ENCODE measurements at regions of chr17 and their contacts with region 1.

Region 1: GRCh38 chr17:76557368-76558197 is 17.7 kb downstream of the PRCD start:
- DNase-seq: peak; percentile 83 to 95
- H3K4me3 ChIP-seq: peak overlapping the region; percentile 97
- H3K27ac ChIP-seq: peak overlapping the region; percentile 85
- H3K4me1 ChIP-seq: peaks cover 27% of the 10 kb centered on the region
- H3K27me3 ChIP-seq: no peaks in the 10 kb centered on the region
- CTCF ChIP-seq: peak; percentile 59

Region 2: GRCh38 chr17:76370261-76370993 is 187.2 kb before region 1 on chr17:
- CTCF ChIA-PET with region 1: no interaction called
- POLR2A ChIA-PET with region 1: no interaction called
- intact Hi-C with region 1: no loop called
- DNase-seq: peak; percentile 66 to 80
- H3K4me3 ChIP-seq: no peak overlapping the region
- H3K27ac ChIP-seq: no peak overlapping the region
- H3K4me1 ChIP-seq: no peaks in the 10 kb centered on the region
- H3K27me3 ChIP-seq: no peaks in the 10 kb centered on the region
- CTCF ChIP-seq: peak; percentile 59; the same call in 1 of the 2 replicates

Region 3: DNA sequence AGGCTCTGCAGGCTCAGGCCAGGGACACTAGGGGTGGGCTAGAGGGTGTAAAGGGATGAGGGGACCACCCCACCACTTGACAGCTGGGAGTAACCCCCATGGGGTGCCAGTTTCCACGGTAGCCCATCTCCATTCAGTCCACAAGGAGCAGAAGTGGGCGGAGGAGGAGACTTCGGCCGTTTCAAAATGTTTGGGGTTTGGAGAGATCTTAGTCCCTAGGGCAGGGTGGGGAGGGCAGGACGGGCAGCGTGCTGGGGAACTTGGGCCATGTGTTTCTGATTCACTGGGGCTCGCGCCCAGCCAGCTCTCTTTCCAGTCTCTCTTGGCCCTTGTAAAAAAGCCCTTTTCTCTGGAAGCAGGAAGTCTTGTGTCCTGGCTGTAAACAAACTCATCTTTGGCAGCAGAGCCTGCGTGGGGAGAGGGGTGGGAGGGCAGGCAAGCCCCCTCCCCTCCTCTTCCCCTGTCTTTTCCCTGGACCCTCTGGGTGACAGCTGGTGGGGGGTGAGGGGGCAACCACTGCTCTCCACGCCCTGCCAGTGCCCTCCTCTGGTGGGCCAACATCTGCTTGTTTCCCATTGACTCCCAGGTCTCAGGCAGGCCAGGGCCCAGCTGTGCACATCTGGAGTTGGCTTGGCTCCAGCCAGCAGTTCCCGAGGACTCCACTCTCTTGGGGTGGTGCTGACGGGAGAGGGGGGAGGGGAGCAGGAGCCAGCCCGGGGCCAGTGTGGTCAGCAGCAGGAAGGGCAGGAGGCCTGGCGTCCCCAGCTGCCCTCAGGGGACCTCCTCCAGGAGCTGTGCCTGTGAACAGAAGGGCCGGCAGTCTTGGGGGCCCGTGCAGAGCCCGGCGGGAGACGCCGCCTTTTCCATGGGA is 28.1 kb before region 1 on chr17:
- CTCF ChIA-PET with region 1: interaction called, 9 read pairs
- POLR2A ChIA-PET with region 1: interaction called, 11 read pairs
- intact Hi-C with region 1: loop called (anchors 1 kb)
- DNase-seq: peak in 1 of 2 experiments; percentile 57
- H3K4me3 ChIP-seq: no peak overlapping the region
- H3K27ac ChIP-seq: peak overlapping the region; percentile 54
- H3K4me1 ChIP-seq: peaks cover 36% of the 10 kb centered on the region
- H3K27me3 ChIP-seq: no peaks in the 10 kb centered on the region
- CTCF ChIP-seq: no peak

Region 4: DNA sequence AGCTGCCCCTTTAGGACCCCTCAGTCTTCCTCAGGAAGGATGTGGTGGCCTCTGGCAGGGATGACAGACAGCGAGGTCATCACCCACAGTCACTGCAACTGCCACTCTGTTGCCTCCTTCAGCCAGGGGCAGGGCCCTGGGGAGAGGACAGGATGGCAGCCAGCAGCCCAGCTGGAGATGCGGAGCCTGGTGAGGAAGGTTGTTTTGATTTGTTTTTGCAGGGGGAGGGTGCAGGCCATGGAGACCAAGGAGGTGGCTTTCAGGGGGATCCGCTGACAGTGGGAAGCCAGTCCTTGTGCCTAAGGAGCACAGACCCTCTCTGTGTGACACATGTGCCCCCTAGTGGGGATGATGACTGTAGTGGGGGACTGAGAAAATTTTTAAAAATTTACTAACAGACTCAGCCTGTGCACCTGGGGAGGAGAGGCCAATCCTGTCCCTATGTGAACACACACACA is 10.4 kb before region 1 on chr17:
- CTCF ChIA-PET with region 1: no interaction called
- POLR2A ChIA-PET with region 1: no interaction called
- intact Hi-C with region 1: no loop called
- DNase-seq: peak in 1 of 2 experiments; percentile 47
- H3K4me3 ChIP-seq: no peak overlapping the region
- H3K27ac ChIP-seq: no peak overlapping the region
- H3K4me1 ChIP-seq: peaks cover 15% of the 10 kb centered on the region
- H3K27me3 ChIP-seq: no peaks in the 10 kb centered on the region
- CTCF ChIP-seq: peak; percentile 69

Region 5: GRCh38 chr17:76612977-76613851 is 55.6 kb after region 1 on chr17:
- CTCF ChIA-PET with region 1: interaction called, 4 read pairs
- POLR2A ChIA-PET with region 1: no interaction called
- intact Hi-C with region 1: loop called (anchors 1 kb)
- DNase-seq: peak; percentile 94 to 95
- H3K4me3 ChIP-seq: no peak overlapping the region
- H3K27ac ChIP-seq: no peak overlapping the region
- H3K4me1 ChIP-seq: peaks cover 28% of the 10 kb centered on the region
- H3K27me3 ChIP-seq: no peaks in the 10 kb centered on the region
- CTCF ChIP-seq: peak; percentile 56

Region 6: DNA sequence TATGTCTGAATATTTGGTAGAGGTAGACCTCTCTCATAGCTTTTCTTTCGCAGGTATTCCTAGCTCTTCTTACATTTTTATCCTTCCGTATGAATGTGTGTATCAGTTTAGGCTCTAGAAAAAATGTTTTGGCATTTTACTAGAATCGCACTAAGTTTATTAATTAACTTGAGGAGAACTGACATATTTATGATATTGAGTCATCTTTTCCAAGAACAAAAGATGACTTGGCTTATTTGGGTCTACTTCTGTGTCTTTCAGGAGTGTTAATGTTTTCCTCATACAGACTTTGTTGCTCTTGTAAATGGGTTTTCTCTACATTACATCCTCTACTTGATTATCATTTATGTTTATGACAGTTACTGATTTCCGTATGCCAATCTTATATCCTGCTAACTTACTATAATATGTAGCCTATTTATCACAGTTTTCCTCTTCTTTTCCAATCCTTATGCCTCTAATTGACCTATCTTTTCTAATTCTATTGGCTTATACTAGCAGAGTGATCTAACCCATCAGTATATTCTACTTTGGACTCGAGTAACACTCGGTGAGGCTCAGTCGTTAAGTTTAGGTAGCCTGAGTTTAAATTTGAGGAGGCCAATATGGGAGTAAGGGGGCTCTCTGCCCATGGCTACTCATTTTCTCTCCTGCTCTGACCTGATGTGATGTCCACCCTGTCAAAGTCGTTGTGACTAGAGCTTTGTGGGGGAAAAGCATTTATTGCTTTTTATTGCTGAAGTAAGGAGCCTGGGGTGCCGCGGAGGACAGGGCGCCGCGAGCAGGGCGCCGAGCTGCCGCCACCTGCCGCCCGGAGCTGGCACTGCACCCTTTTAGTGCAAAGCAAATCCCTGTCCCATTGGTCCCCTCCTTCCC is 65.9 kb after region 1 on chr17:
- CTCF ChIA-PET with region 1: no interaction called
- POLR2A ChIA-PET with region 1: interaction called, 10 read pairs
- intact Hi-C with region 1: no loop called
- DNase-seq: peak in 1 of 2 experiments; percentile 76
- H3K4me3 ChIP-seq: no peak overlapping the region
- H3K27ac ChIP-seq: no peak overlapping the region
- H3K4me1 ChIP-seq: peaks cover 15% of the 10 kb centered on the region
- H3K27me3 ChIP-seq: no peaks in the 10 kb centered on the region
- CTCF ChIP-seq: peak; percentile 83

Region 7: GRCh38 chr17:76681222-76682137 is 123.9 kb after region 1 on chr17:
- CTCF ChIA-PET with region 1: interaction called, 6 read pairs
- POLR2A ChIA-PET with region 1: interaction called, 5 read pairs
- intact Hi-C with region 1: loop called (anchors 1 kb)
- DNase-seq: peak in 1 of 2 experiments; percentile 70
- H3K4me3 ChIP-seq: no peak overlapping the region
- H3K27ac ChIP-seq: no peak overlapping the region
- H3K4me1 ChIP-seq: no peaks in the 10 kb centered on the region
- H3K27me3 ChIP-seq: no peaks in the 10 kb centered on the region
- CTCF ChIP-seq: peak; percentile 77

Region 8: DNA sequence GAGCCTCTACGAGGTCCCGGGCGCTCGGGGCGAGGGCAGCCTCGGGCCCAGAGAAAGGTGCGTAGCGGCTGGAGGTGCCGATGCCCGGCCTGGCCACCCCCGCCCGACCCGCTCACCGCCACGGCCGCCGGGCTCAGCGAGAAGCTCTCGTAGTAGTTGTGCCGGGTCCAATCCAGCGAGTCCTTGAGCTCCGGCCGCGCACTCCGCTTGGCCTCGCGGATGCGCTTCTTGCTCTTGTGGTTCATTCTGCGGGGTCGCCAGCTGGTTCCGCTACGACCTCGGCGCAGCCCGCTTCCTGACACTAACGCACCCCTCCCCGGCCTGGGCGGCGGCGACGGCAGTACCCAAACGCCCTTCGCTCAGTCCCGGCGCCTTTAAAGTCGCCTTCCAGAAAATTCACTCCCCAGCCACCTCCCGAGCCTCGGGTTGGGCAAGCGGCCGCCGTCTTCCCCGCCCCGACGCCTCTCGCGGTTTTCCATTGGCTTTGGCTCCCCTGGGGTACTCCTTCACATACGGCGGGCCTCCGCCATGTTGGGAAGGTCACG is 168.7 kb after region 1 on chr17 and contains the start of gene JMJD6:
- CTCF ChIA-PET with region 1: no interaction called
- POLR2A ChIA-PET with region 1: no interaction called
- intact Hi-C with region 1: loop called (anchors 5 kb)
- DNase-seq: peak; percentile 79 to 95
- H3K4me3 ChIP-seq: peak within 1 kb of the TSS; percentile 78
- H3K27ac ChIP-seq: peak within 1 kb of the TSS; percentile 81
- H3K4me1 ChIP-seq: peaks cover 12% of the 10 kb centered on the region
- H3K27me3 ChIP-seq: no peaks in the 10 kb centered on the region
- CTCF ChIP-seq: no peak
- total RNA-seq, gene JMJD6: 19.4 and 25.2 TPM in 2 replicates